K562 (cell line): ENCODE measurements at regions of chr4 and their contacts with region 1.

Region 1: DNA sequence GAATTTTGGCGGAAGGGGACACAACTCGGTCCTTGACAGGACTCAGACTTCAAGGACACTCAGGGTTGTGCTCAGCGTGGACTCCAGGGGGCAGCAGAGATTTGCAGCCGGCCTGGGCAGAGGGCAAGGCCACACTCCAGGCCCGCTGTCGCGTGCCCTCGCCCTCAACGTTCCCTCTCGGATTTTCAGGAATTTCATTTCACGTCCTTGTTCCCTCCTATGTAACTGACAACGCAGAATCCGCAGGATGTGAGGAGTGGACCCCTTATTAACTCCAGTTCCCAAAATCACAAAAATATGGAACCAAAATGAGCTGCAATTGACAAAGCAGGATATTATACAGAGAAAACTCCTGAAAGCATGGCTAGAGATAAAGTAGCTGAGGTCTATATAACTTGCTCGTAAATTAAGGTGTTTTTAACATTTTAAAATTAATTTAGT is 21.0 kb upstream of the DCTD start:
- DNase-seq: peak; percentile 63 to 79 (median 72)
- ATAC-seq: peak; percentile 100
- H3K4me3 ChIP-seq: no peak overlapping the region
- H3K27ac ChIP-seq: no peak overlapping the region
- H3K4me1 ChIP-seq: peaks cover 0 to 3% of the 10 kb centered on the region in 2 experiments; a peak in 1 of 5 replicates
- H3K27me3 ChIP-seq: peaks cover 0 to 6% of the 10 kb centered on the region in 2 experiments; a peak in 1 of 5 replicates
- CTCF ChIP-seq: peak; percentile 93 to 94 (median 93)
- EP300 ChIP-seq: no peak
- POLR2A ChIP-seq: no peak
- RAD21 ChIP-seq: peak; percentile 97

Region 2: DNA sequence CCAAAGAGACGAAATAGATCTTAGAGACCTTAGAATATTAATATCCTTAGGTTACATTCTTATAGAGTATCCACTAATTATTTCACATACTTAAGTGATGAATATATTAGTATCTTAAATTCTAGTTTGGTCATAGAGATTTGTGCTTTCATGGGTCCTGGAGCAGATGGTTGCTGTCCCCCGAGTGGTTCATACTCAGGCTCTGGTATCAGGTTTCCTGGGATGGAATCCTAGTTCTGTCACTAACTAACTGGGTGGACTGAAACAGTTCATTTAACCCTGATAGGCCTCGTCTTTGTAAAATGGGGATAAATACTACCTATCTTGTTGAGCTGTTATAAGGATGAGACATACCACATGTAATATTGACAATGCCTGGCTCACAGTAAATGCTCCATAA is 430.4 kb before region 1 on chr4:
- CTCF ChIA-PET with region 1: no interaction called
- POLR2A ChIA-PET with region 1: no interaction called
- in situ Hi-C with region 1: no loop called
- intact Hi-C with region 1: no loop called
- DNase-seq: no peak
- ATAC-seq: no peak
- H3K4me3 ChIP-seq: no peak overlapping the region
- H3K27ac ChIP-seq: no peak overlapping the region
- H3K4me1 ChIP-seq: no peaks in the 10 kb centered on the region
- H3K27me3 ChIP-seq: no peaks in the 10 kb centered on the region
- CTCF ChIP-seq: no peak
- EP300 ChIP-seq: no peak
- POLR2A ChIP-seq: no peak
- RAD21 ChIP-seq: no peak

Region 3: DNA sequence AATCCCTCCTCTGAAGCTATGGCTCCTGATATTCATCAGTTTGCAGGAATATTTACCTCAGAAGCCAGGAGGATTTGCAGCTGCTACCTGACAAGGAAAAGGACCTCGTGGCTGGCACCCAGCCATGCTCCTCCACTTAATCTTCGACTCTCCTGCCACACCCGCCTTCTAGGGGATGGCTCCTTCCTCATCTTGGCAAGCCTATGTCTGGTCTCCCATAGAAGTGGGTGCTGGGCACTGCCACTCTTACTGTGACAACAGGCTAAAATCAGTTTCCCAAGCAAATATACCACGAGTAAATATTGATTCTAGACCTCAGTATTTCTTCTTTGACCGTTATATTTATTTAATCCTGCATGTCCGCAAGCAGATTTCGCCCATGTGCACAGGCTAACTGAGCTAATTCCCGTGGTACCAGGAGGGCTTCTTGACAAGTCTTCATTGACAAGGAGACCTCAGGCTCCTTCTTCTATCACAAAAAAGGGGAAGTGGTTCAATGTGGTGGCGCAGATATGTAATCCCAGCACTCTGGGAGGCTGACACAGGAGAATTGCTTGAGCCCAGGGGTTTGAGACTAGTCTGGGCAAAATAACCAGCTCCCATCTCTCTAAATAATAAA is 31.5 kb after region 1 on chr4:
- CTCF ChIA-PET with region 1: no interaction called
- POLR2A ChIA-PET with region 1: interaction called, 3 read pairs
- in situ Hi-C with region 1: no loop called
- intact Hi-C with region 1: loop called (anchors 2 kb)
- DNase-seq: peak; percentile 10 to 82 (median 36)
- ATAC-seq: peak; percentile 89
- H3K4me3 ChIP-seq: peak overlapping the region; percentile 34
- H3K27ac ChIP-seq: peak overlapping the region; percentile 89
- H3K4me1 ChIP-seq: peaks cover 9 to 12% of the 10 kb centered on the region in 2 experiments
- H3K27me3 ChIP-seq: no peaks in the 10 kb centered on the region
- CTCF ChIP-seq: no peak
- EP300 ChIP-seq: peak; percentile 80
- POLR2A ChIP-seq: no peak
- RAD21 ChIP-seq: no peak

Region 4: DNA sequence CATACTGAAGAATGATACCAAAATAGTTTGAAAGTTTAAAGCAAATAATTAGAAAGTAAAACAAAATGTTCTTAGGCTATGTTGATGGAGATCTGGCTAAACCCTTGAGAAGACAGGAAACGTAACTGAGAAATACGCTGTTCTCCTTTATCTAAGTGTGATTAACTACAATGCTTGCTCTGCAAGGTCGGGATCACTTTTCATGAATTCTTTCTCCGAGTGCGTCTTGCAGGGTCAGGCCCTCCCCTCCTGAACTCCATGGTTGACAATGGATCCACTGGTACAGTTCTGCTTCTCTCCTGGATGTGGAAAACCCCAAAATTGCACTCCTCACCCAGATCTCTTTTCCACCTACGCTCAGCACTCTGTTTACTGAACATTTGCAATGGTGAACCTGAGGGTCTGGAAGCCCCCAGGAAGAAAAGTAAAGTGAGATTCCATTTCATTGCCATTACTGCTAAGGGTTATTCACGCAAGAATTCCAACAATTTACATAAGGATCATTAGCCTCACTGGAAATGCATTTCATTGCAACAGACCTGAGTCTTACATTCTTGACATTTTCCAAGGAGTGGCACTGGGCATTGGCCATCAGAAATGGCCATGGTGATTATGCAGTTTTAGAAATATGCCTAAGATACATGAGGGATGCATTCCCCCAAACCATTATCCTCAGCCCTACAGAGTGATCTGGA is 136.2 kb after region 1 on chr4:
- CTCF ChIA-PET with region 1: no interaction called
- POLR2A ChIA-PET with region 1: no interaction called
- in situ Hi-C with region 1: loop called (anchors 5 kb)
- intact Hi-C with region 1: loop called (anchors 1 kb)
- DNase-seq: no peak
- ATAC-seq: no peak
- H3K4me3 ChIP-seq: no peak overlapping the region
- H3K27ac ChIP-seq: no peak overlapping the region
- H3K4me1 ChIP-seq: no peaks in the 10 kb centered on the region
- H3K27me3 ChIP-seq: no peaks in the 10 kb centered on the region
- CTCF ChIP-seq: no peak
- EP300 ChIP-seq: no peak
- POLR2A ChIP-seq: no peak
- RAD21 ChIP-seq: no peak

Region 5: GRCh38 chr4:183249857-183250256 is 311.6 kb after region 1 on chr4:
- CTCF ChIA-PET with region 1: interaction called, 21 read pairs
- POLR2A ChIA-PET with region 1: no interaction called
- in situ Hi-C with region 1: loop called (anchors 5 kb)
- intact Hi-C with region 1: no loop called
- DNase-seq: peak in 2 of 4 experiments; percentile 24 to 40
- ATAC-seq: peak; percentile 82
- H3K4me3 ChIP-seq: no peak overlapping the region
- H3K27ac ChIP-seq: no peak overlapping the region
- H3K4me1 ChIP-seq: no peaks in the 10 kb centered on the region; a peak in 1 of 5 replicates
- H3K27me3 ChIP-seq: no peaks in the 10 kb centered on the region
- CTCF ChIP-seq: peak; percentile 38 to 61 (median 43); a peak in 5 of 6 replicates
- EP300 ChIP-seq: no peak
- POLR2A ChIP-seq: no peak
- RAD21 ChIP-seq: peak; percentile 67

Region 6: DNA sequence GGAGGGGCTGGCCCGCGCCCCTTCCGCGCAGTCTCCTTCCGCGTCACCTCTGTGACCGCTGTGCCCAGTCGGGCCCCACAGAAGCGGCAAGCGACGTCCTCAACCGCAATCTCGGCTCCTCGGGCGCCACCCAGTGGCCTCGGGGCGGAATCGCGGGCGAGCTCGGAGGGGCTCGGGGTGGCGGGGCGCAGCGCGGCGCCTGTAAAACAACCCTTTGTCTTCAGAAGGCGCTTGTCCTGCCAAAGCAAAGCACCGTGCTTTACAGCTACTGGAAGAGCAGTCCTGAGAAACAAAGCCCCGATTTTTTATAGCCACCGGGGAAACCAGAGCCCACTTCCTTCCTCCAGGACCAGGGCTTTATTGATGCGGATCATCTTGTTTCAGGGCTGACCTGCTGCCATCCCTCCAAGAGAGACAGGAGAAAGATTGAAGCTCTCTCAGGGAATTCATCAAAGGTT is 468.9 kb after region 1 on chr4:
- CTCF ChIA-PET with region 1: no interaction called
- POLR2A ChIA-PET with region 1: no interaction called
- in situ Hi-C with region 1: no loop called
- intact Hi-C with region 1: loop called (anchors 2 kb)
- DNase-seq: peak; percentile 78 to 88 (median 80)
- ATAC-seq: peak; percentile 98
- H3K4me3 ChIP-seq: peak overlapping the region; percentile 38
- H3K27ac ChIP-seq: no peak overlapping the region; the same call in 2 of the 3 replicates
- H3K4me1 ChIP-seq: peaks cover 7 to 8% of the 10 kb centered on the region in 2 experiments; a peak in 4 of 5 replicates
- H3K27me3 ChIP-seq: no peaks in the 10 kb centered on the region
- CTCF ChIP-seq: peak; percentile 86 to 92 (median 91)
- EP300 ChIP-seq: no peak; the same call in 1 of the 2 replicates
- POLR2A ChIP-seq: no peak
- RAD21 ChIP-seq: peak; percentile 78 to 85